IMR-90 (cell line): ENCODE measurements at regions of chr1 and their contacts with region 1.

Region 1: GRCh38 chr1:163307479-163308171 is 14.1 kb upstream of the NUF2 start:
- DNase-seq: peak; percentile 88
- ATAC-seq: peak; percentile 89
- H3K4me3 ChIP-seq: no peak overlapping the region
- H3K27ac ChIP-seq: peak overlapping the region; percentile 25; the same call in 1 of the 2 replicates
- H3K4me1 ChIP-seq: peaks cover 3% of the 10 kb centered on the region; the same call in 1 of the 2 replicates
- H3K27me3 ChIP-seq: no peaks in the 10 kb centered on the region
- CTCF ChIP-seq: no peak
- POLR2A ChIP-seq: no peak
- RAD21 ChIP-seq: no peak

Region 2: GRCh38 chr1:163186862-163187261 is 120.8 kb before region 1 on chr1:
- CTCF ChIA-PET with region 1: no interaction called
- POLR2A ChIA-PET with region 1: no interaction called
- dilution Hi-C with region 1: no loop called
- in situ Hi-C with region 1: loop called (anchors 10 kb)
- intact Hi-C with region 1: no loop called
- DNase-seq: no peak
- ATAC-seq: no peak
- H3K4me3 ChIP-seq: no peak overlapping the region
- H3K27ac ChIP-seq: no peak overlapping the region
- H3K4me1 ChIP-seq: no peaks in the 10 kb centered on the region
- H3K27me3 ChIP-seq: no peaks in the 10 kb centered on the region
- CTCF ChIP-seq: no peak
- POLR2A ChIP-seq: no peak
- RAD21 ChIP-seq: no peak